Colonic mucosa (tissue), 4 donors: ENCODE measurements at regions of chr1 and their contacts with region 1.

Region 1: GRCh38 chr1:200279810-200280411 is 129.9 kb downstream of the ZNF281 start:
- DNase-seq: peak; percentile 78
- H3K4me3 ChIP-seq: no peak overlapping the region
- H3K27ac ChIP-seq: no peak overlapping the region
- H3K4me1 ChIP-seq: no peaks in the 10 kb centered on the region
- H3K27me3 ChIP-seq: no peaks in the 10 kb centered on the region
- CTCF ChIP-seq: peak; percentile 71

Region 2: DNA sequence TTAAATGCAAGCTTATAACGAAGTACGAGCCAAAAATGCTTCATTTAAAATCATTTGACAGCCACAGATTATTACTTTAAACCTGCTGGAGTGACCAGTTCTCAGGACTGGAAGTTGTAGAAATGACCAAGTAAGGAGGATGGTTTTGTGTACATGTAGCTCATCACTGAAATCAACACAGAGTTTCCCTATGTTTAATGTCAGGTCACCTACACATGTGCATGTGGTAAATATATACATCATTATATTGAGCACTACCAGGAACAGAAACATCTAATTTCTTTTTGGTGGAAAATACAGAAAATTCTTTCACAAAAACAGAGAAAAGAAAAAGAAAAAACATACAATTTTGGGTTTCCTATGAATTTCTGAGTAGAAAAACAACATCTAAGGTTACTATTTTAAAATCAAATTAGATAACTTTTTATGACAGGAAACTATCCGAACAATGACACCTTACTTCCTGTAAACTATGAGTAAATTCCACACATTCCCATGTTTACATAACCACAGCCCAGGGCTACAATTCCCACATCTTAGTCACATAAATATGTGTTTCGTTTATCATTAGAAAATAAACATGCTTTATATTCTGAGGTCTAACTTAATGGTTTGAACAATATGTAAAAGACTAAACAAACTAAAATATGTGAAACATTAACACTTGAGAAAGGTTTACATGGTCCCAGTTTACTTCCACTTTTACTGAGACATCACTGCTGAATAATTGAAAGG is 56.4 kb after region 1 on chr1:
- intact Hi-C with region 1: no loop called
- DNase-seq: no peak
- H3K4me3 ChIP-seq: no peak overlapping the region
- H3K27ac ChIP-seq: no peak overlapping the region
- H3K4me1 ChIP-seq: no peaks in the 10 kb centered on the region
- H3K27me3 ChIP-seq: no peaks in the 10 kb centered on the region
- CTCF ChIP-seq: no peak

Region 3: DNA sequence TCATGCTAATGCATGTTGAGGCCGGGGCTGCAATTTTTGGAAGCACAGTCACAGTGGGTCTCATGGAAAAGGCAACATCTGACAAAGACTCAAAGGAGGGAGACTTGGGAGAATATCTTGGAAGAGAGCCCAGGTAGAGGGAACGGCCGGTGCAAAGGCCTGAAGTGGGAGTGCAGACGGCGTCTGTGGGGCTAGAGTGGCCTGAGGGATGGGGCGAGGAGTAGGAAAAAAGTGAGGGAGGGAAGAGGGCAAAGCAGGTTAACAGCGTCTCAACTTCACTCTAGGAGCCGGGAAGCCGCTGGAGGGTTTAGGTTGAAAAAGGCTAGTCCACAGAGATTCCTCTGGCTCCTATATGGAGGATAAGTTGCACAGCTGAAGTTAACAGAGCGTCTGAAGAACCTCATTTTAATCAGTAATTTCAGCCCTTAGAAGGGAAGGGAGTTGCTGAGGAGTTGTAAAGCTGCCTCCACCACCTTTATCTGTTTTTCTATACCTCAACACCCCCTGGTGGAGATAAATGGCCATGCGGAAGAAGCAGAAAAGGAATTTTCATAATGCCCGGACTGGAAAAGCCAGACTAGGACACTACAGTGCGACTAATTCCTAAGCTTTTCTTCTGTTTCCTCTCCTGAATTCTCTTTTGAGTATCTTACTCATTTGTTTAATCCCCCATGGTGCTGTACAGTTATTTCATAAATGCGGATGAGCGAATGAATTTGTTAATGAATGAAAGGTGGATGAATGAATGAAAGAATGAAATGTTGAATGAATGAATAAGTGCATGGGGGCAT is 208.7 kb after region 1 on chr1:
- intact Hi-C with region 1: loop called (anchors 5 kb)
- DNase-seq: peak; percentile 68
- H3K4me3 ChIP-seq: no peak overlapping the region
- H3K27ac ChIP-seq: no peak overlapping the region
- H3K4me1 ChIP-seq: no peaks in the 10 kb centered on the region
- H3K27me3 ChIP-seq: no peaks in the 10 kb centered on the region
- CTCF ChIP-seq: peak; percentile 79